Mammary epithelial cell (primary cell): ENCODE measurements at regions of chr7 and their contacts with region 1.

Region 1: GRCh38 chr7:27112955-27113949 is 10.8 kb upstream of the HOXA2 start:
- DNase-seq: peak; percentile 85
- H3K4me3 ChIP-seq: peak overlapping the region; percentile 58 to 71 (median 66)
- H3K27ac ChIP-seq: peak overlapping the region; percentile 73
- H3K4me1 ChIP-seq: peaks cover 71% of the 10 kb centered on the region
- H3K27me3 ChIP-seq: no peaks in the 10 kb centered on the region
- CTCF ChIP-seq: no peak

Region 2: DNA sequence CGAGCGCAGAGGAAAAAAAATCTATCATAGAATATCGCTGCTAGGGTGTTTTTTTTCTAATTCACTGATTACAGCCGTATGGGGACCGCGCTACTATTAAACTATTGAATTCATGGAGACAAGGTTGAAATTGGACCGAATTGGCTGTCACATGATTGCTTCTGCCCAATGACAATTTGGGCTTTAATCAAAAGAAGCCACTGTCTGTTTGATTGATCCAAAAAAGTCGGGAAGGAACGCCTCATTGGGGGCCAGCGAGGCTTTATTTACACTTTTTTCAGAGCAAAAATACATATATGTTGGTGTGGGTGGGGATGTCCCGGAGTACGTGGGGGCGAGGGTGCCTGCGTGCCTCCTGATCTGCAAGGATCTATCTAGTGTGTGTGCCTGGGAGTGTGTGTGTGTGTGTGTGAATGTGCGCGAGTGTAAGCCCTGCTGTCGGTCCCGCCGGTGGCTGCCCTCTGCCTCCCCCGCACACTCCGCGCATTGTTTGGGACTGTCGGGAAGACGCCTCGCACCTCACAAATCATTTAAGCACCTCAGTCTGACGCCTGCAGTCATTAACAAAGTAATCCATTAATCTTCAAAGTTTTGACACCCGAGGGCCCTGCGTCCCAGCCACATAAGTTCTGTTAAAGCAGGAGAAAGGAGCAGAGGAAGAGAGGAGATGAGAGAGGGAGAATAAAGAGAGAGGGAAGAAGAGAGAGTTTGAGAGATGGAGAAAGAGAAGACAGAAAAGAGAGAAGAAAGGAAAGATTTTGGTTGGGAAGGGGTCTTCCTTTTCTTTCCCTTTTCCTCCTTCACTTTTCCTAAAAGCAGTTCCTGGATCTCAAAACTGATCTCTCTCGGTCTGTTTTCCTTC is 10.4 kb before region 1 on chr7 and contains the start of gene HOXA2:
- CTCF ChIA-PET with region 1: no interaction called
- dilution Hi-C with region 1: no loop called
- in situ Hi-C with region 1: no loop called
- intact Hi-C with region 1: loop called (anchors 1 kb)
- DNase-seq: peak; percentile 80
- H3K4me3 ChIP-seq: peak within 1 kb of the TSS; percentile 50 to 82 (median 57)
- H3K27ac ChIP-seq: peak within 1 kb of the TSS; percentile 97
- H3K4me1 ChIP-seq: peaks cover 62% of the 10 kb centered on the region
- H3K27me3 ChIP-seq: no peaks in the 10 kb centered on the region
- CTCF ChIP-seq: no peak
- total RNA-seq, gene HOXA2: 0.50 to 1.5 TPM

Region 3: DNA sequence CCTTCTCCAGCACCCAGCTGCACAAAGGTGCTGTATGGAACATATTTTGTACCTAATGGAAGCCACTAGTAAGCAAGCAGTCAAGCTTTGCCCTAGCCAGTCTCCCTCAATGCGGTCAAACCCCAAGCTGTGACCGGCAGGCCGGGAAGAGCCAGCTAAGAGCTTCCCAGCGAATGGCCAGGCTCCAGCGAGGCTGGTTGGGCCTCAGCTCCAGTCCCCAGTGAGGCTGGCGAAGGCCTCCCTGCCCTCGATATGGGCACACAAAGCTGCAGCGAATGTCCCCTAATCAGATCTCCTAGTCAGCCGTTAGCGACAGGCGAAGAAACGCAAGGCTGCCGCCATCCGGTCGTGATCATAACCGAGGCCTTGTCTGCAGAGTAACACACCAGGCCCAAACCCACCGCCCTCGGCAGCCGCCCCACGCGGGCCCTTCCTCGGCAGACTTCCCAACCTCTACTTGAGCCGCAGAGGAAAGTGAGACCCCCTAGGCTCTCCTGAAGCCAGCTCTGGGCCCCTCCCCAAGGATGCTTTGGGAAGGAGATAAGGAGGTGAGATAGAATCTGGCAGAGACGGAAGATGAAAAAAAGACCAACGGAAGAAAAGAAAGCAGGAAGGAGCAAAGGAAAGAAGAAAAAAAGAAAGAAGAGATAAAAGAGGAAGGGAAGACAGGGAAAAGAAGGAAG is 55.2 kb after region 1 on chr7:
- CTCF ChIA-PET with region 1: no interaction called
- dilution Hi-C with region 1: no loop called
- in situ Hi-C with region 1: no loop called
- intact Hi-C with region 1: loop called (anchors 2 kb)
- DNase-seq: no peak
- H3K4me3 ChIP-seq: no peak overlapping the region
- H3K27ac ChIP-seq: no peak overlapping the region
- H3K4me1 ChIP-seq: peaks cover 27% of the 10 kb centered on the region
- H3K27me3 ChIP-seq: peaks cover 19% of the 10 kb centered on the region
- CTCF ChIP-seq: no peak